ENCODE measurements at regions of chr17 and their contacts with region 1.

Region 1: GRCh38 chr17:67993596-67994361 is 2.5 kb downstream of the C17orf58 start:
- DNase-seq: peak; percentile 87 to 94 (median 91)
- ATAC-seq: peak; percentile 60 to 87 (median 79)
- H3K4me3 ChIP-seq: peak overlapping the region; percentile 56 to 98 (median 78)
- H3K27ac ChIP-seq: peak overlapping the region; percentile 88 to 96 (median 94)
- H3K4me1 ChIP-seq: peaks cover 2 to 38% (median 15%) of the 10 kb centered on the region in 12 donors
- H3K27me3 ChIP-seq: peaks cover 0 to 3% (median 0%) of the 10 kb centered on the region in 9 donors
- CTCF ChIP-seq: no peak
- POLR2A ChIP-seq: peak in 1 of 2 donors; percentile 56

Region 2: DNA sequence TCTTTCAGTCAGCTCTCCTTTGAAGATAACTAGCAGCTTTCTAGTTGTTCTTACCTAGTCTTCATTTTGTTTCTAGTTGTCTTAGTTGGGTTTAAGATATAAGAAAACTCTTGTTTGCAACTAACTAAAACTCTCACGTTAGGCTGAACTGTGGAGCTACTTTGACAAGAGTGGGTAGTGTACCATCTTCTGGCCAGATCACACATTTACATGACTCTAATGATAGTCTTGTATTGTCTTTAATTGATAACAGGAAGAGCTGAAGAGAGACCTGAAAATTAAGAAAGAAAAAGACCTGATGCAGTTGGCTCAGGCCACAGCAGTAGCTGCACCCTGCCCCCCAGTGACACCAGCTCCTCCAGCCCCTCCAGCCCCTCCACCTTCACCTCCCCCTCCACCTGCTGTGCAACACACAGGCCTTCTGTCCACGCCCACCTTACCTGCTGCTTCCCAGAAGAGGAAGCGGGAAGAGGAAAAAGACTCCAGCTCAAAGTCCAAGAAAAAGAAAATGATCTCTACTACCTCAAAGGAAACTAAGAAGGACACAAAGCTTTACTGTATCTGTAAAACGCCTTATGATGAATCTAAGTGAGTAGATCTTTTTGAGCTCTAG is 34.4 kb before region 1 on chr17:
- intact Hi-C with region 1: loop called in 1 of 10 experiments (anchors 2 kb)
- DNase-seq: no peak
- ATAC-seq: no peak
- H3K4me3 ChIP-seq: no peak overlapping the region
- H3K27ac ChIP-seq: peak overlapping the region in 2 of 12 donors; percentile 2 to 16
- H3K4me1 ChIP-seq: peaks cover 0 to 6% (median 0%) of the 10 kb centered on the region in 12 donors
- H3K27me3 ChIP-seq: no peaks in the 10 kb centered on the region
- CTCF ChIP-seq: no peak
- POLR2A ChIP-seq: no peak

Region 3: GRCh38 chr17:68019675-68020408 is 26.1 kb after region 1 on chr17:
- intact Hi-C with region 1: loop called in 3 of 10 experiments (anchors 1 to 2 kb)
- DNase-seq: peak; percentile 95 to 98 (median 96)
- ATAC-seq: peak; percentile 96 to 99 (median 98)
- H3K4me3 ChIP-seq: peak overlapping the region; percentile 43 to 77 (median 65)
- H3K27ac ChIP-seq: peak overlapping the region; percentile 68 to 92 (median 90)
- H3K4me1 ChIP-seq: peaks cover 0 to 7% (median 5%) of the 10 kb centered on the region in 12 donors
- H3K27me3 ChIP-seq: no peaks in the 10 kb centered on the region
- CTCF ChIP-seq: peak; percentile 31 to 55 (median 44)
- POLR2A ChIP-seq: peak in 1 of 2 donors; percentile 69

Region 4: DNA sequence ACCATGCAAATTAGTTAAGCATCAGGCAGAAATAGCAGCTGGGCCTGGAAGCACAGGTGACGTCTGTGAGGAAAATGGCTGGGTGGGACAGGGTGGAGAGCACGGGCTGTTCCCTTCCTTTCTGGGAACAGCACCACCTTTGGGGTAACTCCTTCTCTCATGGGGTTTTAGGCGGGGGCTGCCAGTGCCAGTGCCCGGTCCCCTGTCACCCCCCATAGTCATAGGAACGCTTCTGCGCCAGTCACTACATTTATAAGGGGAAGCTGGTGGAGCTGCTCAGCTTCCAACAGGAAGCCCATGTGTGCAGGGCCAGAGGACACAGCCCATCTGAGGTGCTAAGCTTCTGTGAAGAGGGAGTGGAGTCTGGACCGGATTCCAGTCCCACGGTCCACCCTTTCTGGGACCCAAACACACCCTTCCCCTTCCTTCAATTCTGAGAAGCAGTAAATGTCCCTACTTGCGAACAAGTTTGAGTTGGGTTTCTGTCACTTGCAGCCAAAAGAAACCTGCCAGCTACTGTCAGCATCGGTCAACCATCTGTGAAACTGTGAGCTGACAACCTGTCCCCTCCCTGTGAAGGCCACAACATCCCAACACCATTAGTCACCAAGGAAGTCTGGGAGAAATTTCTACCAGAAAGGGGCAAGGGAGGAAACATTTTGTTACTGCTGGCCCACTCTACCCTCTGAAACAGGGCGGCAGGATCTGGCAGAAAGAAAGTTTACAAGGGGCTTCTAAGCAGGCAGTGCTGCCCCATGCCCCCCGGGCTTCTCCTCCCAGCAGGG is 168.1 kb after region 1 on chr17:
- intact Hi-C with region 1: no loop called
- DNase-seq: peak in 4 of 5 donors; percentile 38 to 74 (median 58)
- ATAC-seq: peak; percentile 87 to 93 (median 90)
- H3K4me3 ChIP-seq: no peak overlapping the region
- H3K27ac ChIP-seq: peak overlapping the region; percentile 58 to 96 (median 84)
- H3K4me1 ChIP-seq: peaks cover 0 to 22% (median 2%) of the 10 kb centered on the region in 12 donors
- H3K27me3 ChIP-seq: no peaks in the 10 kb centered on the region
- CTCF ChIP-seq: no peak
- POLR2A ChIP-seq: no peak